ENCODE measurements at regions of chr5 and their contacts with region 1.

Region 1: GRCh38 chr5:53481887-53482716 is 1.7 kb downstream of the FST start:
- DNase-seq: peak; percentile 62
- H3K4me3 ChIP-seq: peak overlapping the region; percentile 48 to 82 (median 64)
- H3K27ac ChIP-seq: no peak overlapping the region
- H3K4me1 ChIP-seq: peaks cover 20% of the 10 kb centered on the region
- H3K27me3 ChIP-seq: peaks cover under 1 to 47% of the 10 kb centered on the region in 2 experiments
- CTCF ChIP-seq: peak in 1 of 2 donors; percentile 35
- POLR2A ChIP-seq: peak; percentile 23

Region 2: DNA sequence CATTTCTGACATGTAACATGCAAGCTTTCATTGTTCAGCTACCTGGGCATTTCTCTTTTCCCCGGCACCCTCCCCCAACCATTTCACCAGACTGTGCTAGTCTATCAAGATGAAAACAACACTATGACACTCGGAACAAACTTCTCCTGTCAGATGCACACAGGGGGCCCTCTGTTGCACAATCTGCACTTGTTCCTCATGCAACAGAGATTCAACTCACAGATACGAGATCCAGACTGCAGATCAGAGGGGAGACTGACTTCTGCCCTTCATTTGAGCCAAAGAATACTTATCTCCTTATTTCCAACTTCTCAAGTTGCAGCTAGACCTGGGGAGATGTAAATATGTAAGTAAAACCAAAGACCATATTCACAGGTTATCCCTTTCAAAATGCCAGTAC is 17.4 kb before region 1 on chr5:
- CTCF ChIA-PET with region 1: interaction called, 11 read pairs
- POLR2A ChIA-PET with region 1: no interaction called
- dilution Hi-C with region 1: no loop called
- intact Hi-C with region 1: no loop called
- DNase-seq: no peak
- H3K4me3 ChIP-seq: no peak overlapping the region
- H3K27ac ChIP-seq: no peak overlapping the region
- H3K4me1 ChIP-seq: no peaks in the 10 kb centered on the region
- H3K27me3 ChIP-seq: peaks cover 13 to 16% of the 10 kb centered on the region in 2 experiments
- CTCF ChIP-seq: no peak
- POLR2A ChIP-seq: no peak

Region 3: GRCh38 chr5:53733852-53734251 is 251.8 kb after region 1 on chr5:
- CTCF ChIA-PET with region 1: no interaction called
- POLR2A ChIA-PET with region 1: no interaction called
- dilution Hi-C with region 1: no loop called
- intact Hi-C with region 1: loop called (anchors 2 kb)
- DNase-seq: no peak
- H3K4me3 ChIP-seq: no peak overlapping the region
- H3K27ac ChIP-seq: no peak overlapping the region
- H3K4me1 ChIP-seq: peaks cover 16% of the 10 kb centered on the region
- H3K27me3 ChIP-seq: peaks cover 0 to 2% of the 10 kb centered on the region in 2 experiments
- CTCF ChIP-seq: no peak
- POLR2A ChIP-seq: no peak

Region 4: DNA sequence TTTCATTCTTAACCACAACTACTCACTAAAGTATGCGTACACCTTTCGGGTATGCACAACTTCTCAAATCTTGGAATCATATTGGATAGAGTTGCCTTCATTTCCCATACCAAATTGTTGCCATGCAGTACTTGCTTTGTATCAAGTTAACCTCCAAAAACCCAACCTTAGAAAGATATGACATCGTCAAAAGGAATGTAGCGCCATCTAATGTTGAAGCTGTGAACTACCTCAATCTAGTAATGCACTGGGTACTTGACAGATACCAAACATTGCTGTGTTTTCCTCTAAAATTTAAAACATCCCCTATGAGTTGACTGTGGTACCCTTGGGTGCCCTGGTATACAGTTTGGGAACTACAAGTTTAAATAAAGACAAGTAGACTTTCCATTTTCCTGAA is 509.8 kb after region 1 on chr5:
- CTCF ChIA-PET with region 1: no interaction called
- POLR2A ChIA-PET with region 1: no interaction called
- dilution Hi-C with region 1: no loop called
- intact Hi-C with region 1: loop called (anchors 1 kb)
- DNase-seq: peak; percentile 28
- H3K4me3 ChIP-seq: no peak overlapping the region
- H3K27ac ChIP-seq: no peak overlapping the region
- H3K4me1 ChIP-seq: no peaks in the 10 kb centered on the region
- H3K27me3 ChIP-seq: no peaks in the 10 kb centered on the region
- CTCF ChIP-seq: peak; percentile 28 to 30
- POLR2A ChIP-seq: no peak

Region 5: GRCh38 chr5:54229041-54229780 is 747.1 kb after region 1 on chr5:
- CTCF ChIA-PET with region 1: interaction called, 22 read pairs
- POLR2A ChIA-PET with region 1: no interaction called
- dilution Hi-C with region 1: no loop called
- intact Hi-C with region 1: loop called (anchors 1 kb)
- DNase-seq: peak; percentile 62
- H3K4me3 ChIP-seq: no peak overlapping the region
- H3K27ac ChIP-seq: no peak overlapping the region
- H3K4me1 ChIP-seq: no peaks in the 10 kb centered on the region
- H3K27me3 ChIP-seq: peaks cover 0 to 3% of the 10 kb centered on the region in 2 experiments
- CTCF ChIP-seq: peak; percentile 78 to 88
- POLR2A ChIP-seq: no peak

Region 6: GRCh38 chr5:54310433-54311175 is 828.5 kb after region 1 on chr5 and contains the start of gene ARL15:
- CTCF ChIA-PET with region 1: no interaction called
- POLR2A ChIA-PET with region 1: no interaction called
- dilution Hi-C with region 1: no loop called
- intact Hi-C with region 1: loop called (anchors 2 kb)
- DNase-seq: peak; percentile 98
- H3K4me3 ChIP-seq: peak within 1 kb of the TSS; percentile 83 to 95 (median 88)
- H3K27ac ChIP-seq: peak within 1 kb of the TSS; percentile 45
- H3K4me1 ChIP-seq: peaks cover 24% of the 10 kb centered on the region
- H3K27me3 ChIP-seq: peaks cover 8 to 11% of the 10 kb centered on the region in 2 experiments
- CTCF ChIP-seq: no peak
- POLR2A ChIP-seq: peak; percentile 99
- total RNA-seq, gene ARL15: 24.4 and 27.3 TPM in 2 replicates

Measured in endothelial cell of umbilical vein (primary cell).